ENCODE measurements at regions of chr22 and their contacts with region 1.

Region 1: GRCh38 chr22:31345331-31346254 is 553 bp downstream of the PATZ1 start:
- DNase-seq: peak; percentile 71 to 85
- H3K4me3 ChIP-seq: peak overlapping the region; percentile 70
- H3K27ac ChIP-seq: no peak overlapping the region; the same call in 1 of the 2 replicates
- H3K4me1 ChIP-seq: peaks cover 57% of the 10 kb centered on the region
- H3K27me3 ChIP-seq: no peaks in the 10 kb centered on the region
- CTCF ChIP-seq: peak; percentile 93

Region 2: GRCh38 chr22:31206906-31207678 is 138.5 kb before region 1 on chr22:
- CTCF ChIA-PET with region 1: no interaction called
- POLR2A ChIA-PET with region 1: interaction called, 22 read pairs
- intact Hi-C with region 1: loop called (anchors 1 kb)
- DNase-seq: peak; percentile 87 to 99
- H3K4me3 ChIP-seq: no peak overlapping the region
- H3K27ac ChIP-seq: peak overlapping the region; percentile 31; the same call in 1 of the 2 replicates
- H3K4me1 ChIP-seq: peaks cover 23% of the 10 kb centered on the region
- H3K27me3 ChIP-seq: no peaks in the 10 kb centered on the region
- CTCF ChIP-seq: no peak

Region 3: GRCh38 chr22:31253949-31254348 is 91.6 kb before region 1 on chr22:
- CTCF ChIA-PET with region 1: no interaction called
- POLR2A ChIA-PET with region 1: no interaction called
- intact Hi-C with region 1: loop called (anchors 1 kb)
- DNase-seq: peak; percentile 81 to 95
- H3K4me3 ChIP-seq: no peak overlapping the region
- H3K27ac ChIP-seq: no peak overlapping the region
- H3K4me1 ChIP-seq: peaks cover 6% of the 10 kb centered on the region; the same call in 1 of the 2 replicates
- H3K27me3 ChIP-seq: no peaks in the 10 kb centered on the region
- CTCF ChIP-seq: no peak

Region 4: DNA sequence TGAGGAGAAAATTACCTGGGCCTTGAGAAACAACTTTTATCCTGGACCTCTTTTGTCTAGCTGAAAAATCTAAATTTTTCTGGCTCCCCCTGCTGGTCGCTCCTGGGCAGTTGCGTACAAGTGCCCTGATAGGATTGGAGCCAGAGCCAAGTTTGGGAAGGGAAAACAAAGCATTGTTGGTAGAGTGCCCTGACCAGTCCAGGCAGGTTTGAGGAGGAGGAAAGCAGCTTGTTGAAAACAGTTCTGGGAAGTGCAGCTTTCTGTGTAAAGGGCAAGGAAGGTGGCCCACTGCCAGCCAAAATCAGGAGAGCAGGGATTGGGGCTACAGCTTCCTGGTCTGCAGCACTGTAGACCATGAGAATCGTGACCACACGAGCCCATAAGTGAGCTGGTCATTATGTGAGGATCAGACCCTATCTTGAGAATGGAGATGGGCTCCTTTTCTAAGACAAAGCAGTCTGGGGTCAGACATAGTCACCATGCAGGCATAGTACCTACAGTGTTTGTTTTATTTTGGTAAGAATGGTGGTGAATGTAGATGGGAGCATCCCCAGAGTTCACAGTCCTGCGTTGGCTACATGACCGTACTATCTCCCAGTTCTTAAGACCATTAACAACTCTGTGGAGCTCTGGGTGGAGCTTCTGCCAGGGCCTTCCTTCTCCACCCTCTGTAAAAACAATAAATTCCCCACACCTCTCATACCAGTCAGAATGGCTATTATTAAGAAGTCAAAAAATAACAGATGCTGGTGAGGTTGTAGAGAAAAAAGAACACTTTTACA is 32.0 kb before region 1 on chr22:
- CTCF ChIA-PET with region 1: no interaction called
- POLR2A ChIA-PET with region 1: interaction called, 4 read pairs
- intact Hi-C with region 1: loop called (anchors 1 kb)
- DNase-seq: peak; percentile 84 to 88
- H3K4me3 ChIP-seq: no peak overlapping the region
- H3K27ac ChIP-seq: peak overlapping the region; percentile 61
- H3K4me1 ChIP-seq: peaks cover 10% of the 10 kb centered on the region
- H3K27me3 ChIP-seq: no peaks in the 10 kb centered on the region
- CTCF ChIP-seq: peak; percentile 96

Region 5: GRCh38 chr22:31323578-31324550 is 21.7 kb before region 1 on chr22:
- CTCF ChIA-PET with region 1: interaction called, 12 read pairs
- POLR2A ChIA-PET with region 1: no interaction called
- intact Hi-C with region 1: no loop called
- DNase-seq: no peak
- H3K4me3 ChIP-seq: no peak overlapping the region
- H3K27ac ChIP-seq: no peak overlapping the region
- H3K4me1 ChIP-seq: no peaks in the 10 kb centered on the region
- H3K27me3 ChIP-seq: no peaks in the 10 kb centered on the region
- CTCF ChIP-seq: no peak

Region 6: DNA sequence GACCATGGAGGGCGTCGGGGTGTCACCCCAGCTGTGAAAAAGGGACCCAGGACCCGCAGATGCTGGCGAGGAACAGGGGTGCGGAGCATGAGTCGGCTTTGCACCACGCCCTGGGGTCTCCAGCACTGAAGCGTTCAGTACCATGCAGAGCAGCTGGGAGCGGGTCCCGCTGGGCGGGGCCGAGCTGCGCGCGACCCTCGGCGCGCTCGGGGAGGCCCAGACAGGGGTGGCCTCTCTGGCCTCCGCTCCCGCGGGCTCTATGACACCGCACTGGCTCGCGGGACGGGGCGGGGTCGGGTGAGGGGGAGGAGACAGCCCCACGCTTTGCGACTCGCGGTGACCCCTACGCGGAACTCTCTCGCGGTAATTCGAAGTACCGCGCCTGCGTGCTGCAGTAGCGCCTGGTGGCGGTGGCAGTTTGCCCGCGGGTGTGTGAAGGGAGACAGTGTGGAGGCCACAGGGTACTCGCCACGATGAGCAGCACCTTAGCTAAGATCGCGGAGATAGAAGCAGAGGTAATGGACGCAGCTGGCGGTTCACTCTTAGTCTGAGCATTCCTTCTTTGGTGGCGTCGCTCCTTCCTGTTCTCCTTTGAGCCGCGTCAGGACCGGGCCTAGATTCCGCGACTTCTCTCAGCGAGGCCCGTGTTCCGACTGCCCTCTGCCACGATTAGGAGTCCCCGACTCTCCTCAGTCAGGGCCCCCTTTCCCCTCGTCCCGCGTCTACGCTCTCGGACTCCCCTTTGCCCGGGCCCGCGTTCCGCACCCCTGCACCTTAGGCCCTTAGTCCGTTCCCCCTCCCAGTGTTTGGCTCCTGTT is 53.8 kb after region 1 on chr22 and contains the start of gene DRG1:
- CTCF ChIA-PET with region 1: no interaction called
- POLR2A ChIA-PET with region 1: no interaction called
- intact Hi-C with region 1: loop called (anchors 1 kb)
- DNase-seq: peak; percentile 89 to 95
- H3K4me3 ChIP-seq: peak within 1 kb of the TSS; percentile 90
- H3K27ac ChIP-seq: peak within 1 kb of the TSS; percentile 34
- H3K4me1 ChIP-seq: peaks cover 14% of the 10 kb centered on the region
- H3K27me3 ChIP-seq: no peaks in the 10 kb centered on the region
- CTCF ChIP-seq: no peak
- total RNA-seq, gene DRG1: 60.1 and 73.8 TPM in 2 replicates

Measured in PC-9 (cell line).